ENCODE measurements at regions of chr1 and their contacts with region 1.

Region 1: GRCh38 chr1:89804642-89805237 is 16.1 kb upstream of the LRRC8D start:
- DNase-seq: peak; percentile 96
- H3K4me3 Mint-ChIP-seq: no peak overlapping the region
- H3K27ac Mint-ChIP-seq: no peak overlapping the region
- H3K4me1 Mint-ChIP-seq: no peaks in the 10 kb centered on the region
- H3K27me3 Mint-ChIP-seq: peaks cover 2% of the 10 kb centered on the region

Region 2: GRCh38 chr1:89953072-89953626 is 148.4 kb after region 1 on chr1:
- CTCF ChIA-PET with region 1: interaction called, 6 read pairs
- intact Hi-C with region 1: loop called (anchors 1 kb)
- DNase-seq: peak; percentile 66
- H3K4me3 Mint-ChIP-seq: no peak overlapping the region
- H3K27ac Mint-ChIP-seq: no peak overlapping the region
- H3K4me1 Mint-ChIP-seq: peaks cover 18% of the 10 kb centered on the region
- H3K27me3 Mint-ChIP-seq: no peaks in the 10 kb centered on the region